ENCODE measurements at regions of chr6 and their contacts with region 1.

Region 1: GRCh38 chr6:36594029-36594815 is at the start of gene SRSF3:
- DNase-seq: peak; percentile 98
- H3K4me3 Mint-ChIP-seq: peak within 1 kb of the TSS; percentile 80
- H3K27ac Mint-ChIP-seq: peak within 1 kb of the TSS; percentile 100
- H3K4me1 Mint-ChIP-seq: peaks cover 49% of the 10 kb centered on the region
- H3K27me3 Mint-ChIP-seq: peaks cover 14% of the 10 kb centered on the region
- CTCF ChIP-seq: no peak
- total RNA-seq, gene SRSF3: 347 and 370 TPM in 2 replicates

Region 2: GRCh38 chr6:36442671-36443470 is 151.4 kb before region 1 on chr6 and contains the starts of genes KCTD20 and PXT1:
- CTCF ChIA-PET with region 1: no interaction called
- intact Hi-C with region 1: loop called (anchors 5 kb)
- DNase-seq: peak; percentile 94
- H3K4me3 Mint-ChIP-seq: peak within 1 kb of the TSS; percentile 95
- H3K27ac Mint-ChIP-seq: peak within 1 kb of the TSS; percentile 95
- H3K4me1 Mint-ChIP-seq: peaks cover 32% of the 10 kb centered on the region
- H3K27me3 Mint-ChIP-seq: no peaks in the 10 kb centered on the region
- CTCF ChIP-seq: no peak
- total RNA-seq, gene KCTD20: 43.3 and 45.1 TPM in 2 replicates
- total RNA-seq, gene PXT1: 0.21 TPM in 1 of 2 replicates, not detected in the other

Region 3: GRCh38 chr6:36546920-36547645 is 47.1 kb before region 1 on chr6 and contains the start of gene STK38:
- CTCF ChIA-PET with region 1: no interaction called
- intact Hi-C with region 1: loop called (anchors 2 kb)
- DNase-seq: peak; percentile 94
- H3K4me3 Mint-ChIP-seq: peak within 1 kb of the TSS; percentile 98
- H3K27ac Mint-ChIP-seq: peak within 1 kb of the TSS; percentile 96
- H3K4me1 Mint-ChIP-seq: peaks cover 20% of the 10 kb centered on the region
- H3K27me3 Mint-ChIP-seq: no peaks in the 10 kb centered on the region
- CTCF ChIP-seq: no peak
- total RNA-seq, gene STK38: 63.0 and 70.3 TPM in 2 replicates

Region 4: GRCh38 chr6:36576561-36576960 is 17.7 kb before region 1 on chr6:
- CTCF ChIA-PET with region 1: interaction called, 6 read pairs
- intact Hi-C with region 1: loop called (anchors 2 kb)
- DNase-seq: no peak
- H3K4me3 Mint-ChIP-seq: peak overlapping the region; percentile 3
- H3K27ac Mint-ChIP-seq: peak overlapping the region; percentile 95
- H3K4me1 Mint-ChIP-seq: peaks cover 39% of the 10 kb centered on the region
- H3K27me3 Mint-ChIP-seq: no peaks in the 10 kb centered on the region
- CTCF ChIP-seq: no peak

Region 5: DNA sequence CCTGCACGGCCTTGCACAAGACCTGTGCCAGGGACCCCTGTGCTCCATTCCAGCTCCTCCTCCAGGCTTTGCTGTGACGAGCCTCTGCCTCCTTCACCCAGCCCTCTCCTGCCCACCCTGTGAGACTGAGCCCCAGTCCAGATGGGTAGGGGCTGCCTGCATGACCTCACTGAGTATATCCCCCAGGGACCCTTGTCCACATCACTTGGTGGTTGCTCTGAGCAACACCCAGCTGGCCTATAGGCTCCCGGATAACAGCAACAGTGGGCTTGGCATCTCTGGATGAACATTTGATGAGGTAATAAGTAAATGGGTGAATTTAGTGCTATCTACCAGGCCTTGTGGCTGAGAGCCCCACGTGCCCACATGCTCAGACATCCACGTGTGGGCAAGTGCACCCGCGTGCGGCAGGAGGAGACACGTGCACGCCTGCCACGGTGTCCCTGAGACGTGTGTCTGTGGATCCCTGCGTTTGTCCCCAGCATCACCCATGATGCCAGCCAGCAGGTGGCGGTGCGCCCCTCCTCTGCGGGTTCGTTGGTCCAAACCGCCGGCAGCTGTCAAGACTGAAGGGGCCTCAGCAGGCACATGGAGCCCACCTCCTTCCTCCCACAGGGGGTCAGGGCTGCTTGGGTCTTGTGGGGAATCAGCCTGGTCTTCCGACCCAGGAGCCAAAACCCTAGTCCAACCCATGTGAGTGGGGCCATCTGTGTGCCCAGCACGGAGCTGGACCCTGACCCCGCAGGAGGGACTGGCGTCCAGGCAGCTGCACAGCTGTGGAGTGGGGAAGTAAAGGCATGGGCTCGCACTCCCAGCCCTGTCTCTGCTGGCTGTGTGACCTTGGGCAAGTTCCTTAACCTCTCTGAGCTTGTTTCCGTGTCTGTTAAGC is 457.2 kb after region 1 on chr6:
- CTCF ChIA-PET with region 1: no interaction called
- intact Hi-C with region 1: no loop called
- DNase-seq: peak; percentile 95
- H3K4me3 Mint-ChIP-seq: no peak overlapping the region
- H3K27ac Mint-ChIP-seq: no peak overlapping the region
- H3K4me1 Mint-ChIP-seq: peaks cover 47% of the 10 kb centered on the region
- H3K27me3 Mint-ChIP-seq: no peaks in the 10 kb centered on the region
- CTCF ChIP-seq: peak; percentile 92

Measured in Calu3 (cell line).